ENCODE measurements at regions of chr20 and their contacts with region 1.

Region 1: DNA sequence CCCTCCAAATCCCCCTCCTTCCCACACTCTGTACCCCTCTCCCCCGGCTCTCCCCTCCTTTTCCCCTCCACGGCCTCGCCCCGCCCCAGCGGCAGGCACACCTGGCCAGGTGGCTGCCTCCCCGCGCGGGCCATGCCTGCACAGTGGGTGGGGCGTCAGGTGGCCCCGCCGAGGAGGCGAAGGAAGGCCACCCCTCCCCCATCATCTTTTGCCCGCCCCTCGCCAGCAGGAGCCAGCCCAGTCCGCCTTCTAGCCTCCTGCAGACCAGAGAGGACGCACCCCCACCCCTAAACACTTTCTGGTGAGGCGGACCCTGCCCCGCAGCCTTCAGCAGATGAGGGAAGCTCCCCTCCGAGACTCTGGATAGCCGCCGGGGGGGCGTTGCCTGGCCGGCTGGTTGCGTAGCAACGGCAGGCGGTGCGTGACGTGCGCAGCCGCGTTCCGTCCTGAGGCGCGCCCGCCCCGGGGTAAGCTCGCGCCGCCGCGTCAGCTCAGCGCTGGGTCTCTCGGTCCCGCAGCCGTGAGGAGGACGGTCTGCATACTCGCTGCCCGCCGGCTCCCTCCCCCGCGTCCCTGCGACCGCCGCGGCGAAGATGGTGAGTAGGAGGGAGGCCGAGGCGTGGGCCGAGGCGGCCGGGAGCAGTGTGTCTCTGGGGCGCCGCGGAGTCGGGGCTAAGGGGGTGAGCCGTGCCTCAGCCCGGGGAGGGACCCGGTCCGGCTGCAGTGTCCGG is at the start of gene DSTN:
- DNase-seq: peak; percentile 97
- total RNA-seq, gene DSTN: 569 TPM

Region 2: DNA sequence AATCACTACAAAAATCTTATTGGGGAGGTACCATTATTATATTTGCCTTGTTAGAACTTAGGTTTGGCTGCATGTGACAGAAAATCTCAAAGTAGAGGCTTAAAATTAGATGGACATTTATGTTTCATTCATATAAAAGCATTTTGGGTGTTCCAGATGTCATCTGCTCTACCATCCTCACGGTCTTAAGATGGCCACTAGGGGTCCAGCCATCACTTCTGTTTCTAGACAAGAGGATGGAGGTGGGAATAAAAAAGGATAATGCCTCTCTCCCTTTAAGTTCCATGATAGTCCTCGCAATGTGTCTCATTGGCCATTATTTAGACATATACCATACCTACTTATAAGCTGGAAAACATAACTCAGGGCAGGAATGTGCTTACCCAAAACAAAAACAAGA is 1926.1 kb before region 1 on chr20:
- intact Hi-C with region 1: no loop called
- DNase-seq: no peak

Region 3: DNA sequence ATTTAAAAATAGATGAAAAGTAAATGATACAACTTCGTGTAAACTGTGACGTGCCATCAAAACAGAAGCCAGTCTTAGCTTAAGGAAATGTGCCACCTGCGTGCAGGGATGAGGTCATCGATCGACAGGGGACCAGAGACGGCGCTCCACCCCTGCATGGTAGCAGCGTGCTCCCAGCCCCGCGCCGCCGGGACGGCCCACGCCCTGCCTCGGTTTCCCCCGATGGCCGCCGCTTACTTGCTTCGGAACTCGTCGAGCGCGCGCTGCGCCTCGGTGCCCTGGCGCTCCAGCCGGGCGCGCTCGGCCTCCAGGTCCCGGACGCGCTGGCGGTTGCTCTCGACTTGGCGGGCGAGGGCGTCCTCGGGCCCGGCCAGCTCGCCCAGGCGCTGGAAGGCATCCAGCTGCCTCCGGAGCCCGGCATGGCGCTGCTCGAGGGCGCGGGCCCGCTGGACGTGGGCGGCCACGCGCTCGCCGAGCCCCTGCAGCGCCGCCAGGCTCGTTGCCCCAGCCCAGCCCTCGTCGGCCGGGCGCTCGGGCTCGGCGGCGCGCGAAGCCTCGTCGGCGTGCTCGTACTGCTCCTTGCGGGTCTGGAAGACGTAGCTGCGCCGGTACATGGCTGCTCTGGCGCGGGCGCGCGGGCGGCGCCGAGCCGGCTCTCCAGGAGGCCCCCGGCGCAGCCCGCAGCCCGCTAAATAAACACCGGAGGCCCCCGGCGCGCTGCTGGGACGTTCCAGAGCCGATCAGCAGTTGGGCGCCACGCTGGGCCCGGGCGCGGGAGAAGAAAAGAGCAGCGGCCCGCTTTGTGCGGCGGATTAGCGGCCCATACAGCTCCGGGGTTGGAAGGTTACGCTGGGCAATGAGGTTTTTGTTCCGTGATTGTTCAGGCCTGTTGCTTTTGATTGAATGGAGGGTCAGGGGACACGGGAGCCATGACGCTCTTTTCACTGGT is 38.8 kb before region 1 on chr20 and contains the start of gene BFSP1:
- intact Hi-C with region 1: no loop called
- DNase-seq: no peak
- total RNA-seq, gene BFSP1: 0.83 TPM

Region 4: GRCh38 chr20:17542993-17543412 is 26.8 kb before region 1 on chr20:
- intact Hi-C with region 1: loop called (anchors 2 kb)
- DNase-seq: no peak

Region 5: DNA sequence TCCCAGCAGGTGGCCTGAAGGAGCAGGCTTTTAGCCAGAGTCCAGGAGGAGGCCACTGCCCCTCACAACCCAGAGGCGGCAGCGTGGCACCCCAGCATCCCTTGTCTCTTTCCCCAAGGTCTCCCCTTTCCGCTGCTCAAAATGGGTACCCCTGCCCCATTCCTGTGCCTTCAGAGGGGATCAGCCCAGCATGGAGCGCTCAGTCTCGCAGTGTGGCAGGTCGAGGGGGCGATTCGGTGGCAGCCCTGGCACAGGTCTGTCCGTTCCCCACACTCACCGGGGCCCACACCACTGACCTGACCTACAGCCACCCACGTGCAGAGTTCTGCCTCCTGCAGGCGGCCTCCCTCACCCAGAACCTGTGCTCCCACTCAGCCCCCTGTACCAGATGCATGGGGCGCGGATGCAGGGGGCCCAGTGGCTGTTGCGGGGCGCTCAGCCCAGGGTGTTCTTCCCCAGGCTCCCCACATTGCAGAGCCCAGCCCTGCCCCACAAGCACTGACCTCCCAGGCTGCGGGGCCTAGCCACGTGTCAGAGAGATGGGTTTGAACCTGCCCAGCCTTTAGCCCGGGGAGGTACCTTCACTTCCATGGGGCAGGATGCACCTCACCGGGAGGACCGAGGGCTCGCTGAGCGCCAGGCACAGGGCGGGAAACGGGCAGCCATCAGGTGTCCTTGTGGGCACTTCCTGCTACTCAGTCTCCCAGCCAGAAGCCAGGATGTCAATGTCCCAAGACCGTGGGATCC is 41.9 kb after region 1 on chr20:
- intact Hi-C with region 1: loop called (anchors 5 kb)
- DNase-seq: no peak